Activated B cell treated with CpG ODN at 0.5 μM for 24 hours (primary cell): ENCODE measurements at regions of chr12 and their contacts with region 1.

Region 1: DNA sequence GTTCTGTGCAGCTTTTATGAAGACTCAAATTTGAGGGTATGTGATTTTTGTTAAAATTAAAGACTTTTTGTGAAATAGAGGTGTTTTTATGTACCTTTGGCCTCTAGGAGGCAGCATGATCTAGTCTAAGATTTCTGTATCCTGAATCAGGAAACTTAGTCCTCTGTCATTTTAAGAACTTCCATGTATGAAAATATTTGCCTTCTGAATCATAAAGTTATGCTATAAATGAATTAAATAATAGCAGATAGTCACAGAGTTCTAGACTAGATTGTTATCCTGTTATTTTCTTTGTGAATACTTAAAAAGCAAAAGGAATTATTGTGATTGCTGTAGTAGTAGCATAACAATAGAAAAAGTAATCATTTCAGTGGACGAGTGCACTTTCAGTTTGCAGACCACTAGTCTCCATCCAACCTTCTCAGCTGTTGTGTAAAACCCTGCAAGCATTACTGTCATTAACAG is 56.3 kb downstream of the FGD4 start:
- DNase-seq: no peak
- ATAC-seq: peak; percentile 45
- H3K4me3 Mint-ChIP-seq: peak overlapping the region; percentile 7
- H3K27ac Mint-ChIP-seq: no peak overlapping the region
- H3K4me1 Mint-ChIP-seq: peaks cover 18% of the 10 kb centered on the region
- H3K27me3 Mint-ChIP-seq: no peaks in the 10 kb centered on the region
- CTCF ChIP-seq: peak; percentile 41

Region 2: DNA sequence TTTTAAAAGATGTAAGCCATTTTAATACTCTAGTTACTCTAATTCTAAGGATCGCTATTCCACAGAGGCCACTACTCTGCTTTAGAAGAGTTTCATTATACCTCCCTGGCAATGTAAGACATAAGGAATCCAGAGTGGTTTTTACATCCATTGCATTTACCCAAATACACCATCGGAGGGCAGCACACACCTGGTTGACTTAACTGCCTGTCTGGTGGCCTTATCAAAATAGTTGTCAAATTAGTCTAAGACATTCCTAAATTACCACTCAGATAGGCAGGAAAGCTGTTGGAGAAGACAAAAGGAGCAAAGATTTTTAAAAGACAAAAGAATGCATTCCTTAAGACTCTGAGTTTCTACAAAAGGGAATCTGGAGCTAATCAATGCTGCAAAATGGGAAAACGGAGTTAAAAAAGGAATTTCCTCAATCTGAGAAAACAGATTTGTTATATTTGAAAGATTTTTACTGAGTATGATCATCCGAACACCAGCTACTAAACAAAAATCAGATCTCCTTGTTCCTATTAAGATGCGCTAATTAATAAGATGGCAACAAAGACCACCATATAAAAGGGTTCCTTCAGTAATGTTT is 90.1 kb before region 1 on chr12:
- CTCF ChIA-PET with region 1: no interaction called
- POLR2A ChIA-PET with region 1: no interaction called
- intact Hi-C with region 1: loop called (anchors 5 kb)
- DNase-seq: no peak
- ATAC-seq: peak; percentile 70
- H3K4me3 Mint-ChIP-seq: no peak overlapping the region
- H3K27ac Mint-ChIP-seq: no peak overlapping the region
- H3K4me1 Mint-ChIP-seq: no peaks in the 10 kb centered on the region
- H3K27me3 Mint-ChIP-seq: no peaks in the 10 kb centered on the region
- CTCF ChIP-seq: no peak

Region 3: DNA sequence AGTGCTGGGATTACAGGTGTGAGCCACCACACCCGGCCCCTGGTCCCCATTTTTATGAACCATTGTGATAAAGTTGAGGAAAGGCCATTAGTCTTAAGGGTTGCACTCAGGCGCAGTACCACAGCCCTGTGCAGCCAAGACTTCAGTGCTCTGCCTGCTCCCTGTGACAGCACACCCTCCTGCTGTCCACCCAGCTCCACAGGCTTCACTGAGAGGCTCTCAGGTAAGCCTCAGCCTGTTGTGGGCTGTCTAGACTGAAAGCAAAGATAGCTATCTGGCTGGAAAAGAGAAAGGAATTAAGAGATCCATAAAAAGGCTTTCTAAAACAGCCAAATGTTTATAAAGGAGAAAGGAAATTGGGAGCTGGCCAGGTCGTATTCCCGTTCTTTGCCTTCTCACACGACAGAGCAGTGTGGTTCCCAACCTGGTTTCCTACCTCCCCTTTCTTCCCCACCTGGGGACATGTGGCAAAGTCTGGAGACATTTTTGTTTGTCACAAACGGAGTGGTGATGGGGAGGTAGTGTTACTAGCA is 204.3 kb after region 1 on chr12:
- CTCF ChIA-PET with region 1: interaction called, 22 read pairs
- POLR2A ChIA-PET with region 1: no interaction called
- intact Hi-C with region 1: loop called (anchors 1 kb)
- DNase-seq: no peak
- ATAC-seq: no peak
- H3K4me3 Mint-ChIP-seq: no peak overlapping the region
- H3K27ac Mint-ChIP-seq: no peak overlapping the region
- H3K4me1 Mint-ChIP-seq: peaks cover 2% of the 10 kb centered on the region
- H3K27me3 Mint-ChIP-seq: no peaks in the 10 kb centered on the region
- CTCF ChIP-seq: no peak

Region 4: GRCh38 chr12:32679091-32679919 is 223.7 kb after region 1 on chr12 and contains the start of gene DNM1L:
- CTCF ChIA-PET with region 1: interaction called, 10 read pairs
- POLR2A ChIA-PET with region 1: no interaction called
- intact Hi-C with region 1: no loop called
- DNase-seq: peak; percentile 86
- ATAC-seq: peak; percentile 95
- H3K4me3 Mint-ChIP-seq: peak within 1 kb of the TSS; percentile 90
- H3K27ac Mint-ChIP-seq: peak within 1 kb of the TSS; percentile 83
- H3K4me1 Mint-ChIP-seq: peaks cover 36% of the 10 kb centered on the region
- H3K27me3 Mint-ChIP-seq: no peaks in the 10 kb centered on the region
- CTCF ChIP-seq: no peak
- total RNA-seq, gene DNM1L: 67.8 and 83.1 TPM in 2 replicates

Region 5: DNA sequence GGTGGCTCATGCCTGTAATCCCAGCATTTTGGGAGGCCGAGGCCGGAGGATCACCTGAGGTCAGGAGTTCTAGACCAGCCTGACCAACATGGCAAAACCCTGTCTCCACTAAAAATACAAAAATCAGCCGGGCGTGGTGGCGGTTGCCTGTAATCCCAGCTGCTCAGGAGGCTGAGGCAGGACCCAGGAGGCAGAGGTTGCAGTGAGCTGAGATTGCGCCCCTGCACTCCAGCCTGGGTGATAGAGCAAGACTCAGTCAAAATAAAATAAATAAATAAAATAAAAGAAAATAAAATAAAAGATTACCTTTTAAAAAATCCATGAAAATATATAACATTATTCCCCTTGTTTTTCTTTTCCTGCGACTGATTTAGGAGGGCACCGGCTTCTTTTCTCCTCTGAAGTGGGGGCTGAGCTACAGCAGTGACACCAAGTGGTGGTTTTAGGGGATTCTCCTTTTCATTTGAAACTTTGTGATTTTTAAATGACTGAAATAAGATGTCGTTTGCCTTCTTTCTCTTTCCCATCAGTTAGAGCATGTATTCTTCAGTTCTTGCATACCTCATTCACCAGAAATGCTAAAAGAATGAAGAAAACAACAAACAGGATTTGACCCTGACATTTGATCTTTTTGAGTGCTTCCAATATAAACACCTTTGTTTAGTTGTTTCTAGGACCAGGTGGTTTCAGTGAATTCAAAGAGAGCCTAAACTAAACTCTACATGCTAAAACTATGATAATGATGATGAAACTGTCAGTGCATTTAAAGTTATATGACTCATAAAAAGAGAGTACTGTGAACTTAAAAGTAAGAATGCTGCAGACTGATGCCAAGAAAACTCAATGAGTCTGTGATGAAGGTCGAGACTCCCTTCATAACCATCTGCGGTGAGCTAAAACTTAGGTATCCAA is 463.5 kb after region 1 on chr12:
- CTCF ChIA-PET with region 1: no interaction called
- POLR2A ChIA-PET with region 1: no interaction called
- intact Hi-C with region 1: loop called (anchors 2 kb)
- DNase-seq: no peak
- ATAC-seq: no peak
- H3K4me3 Mint-ChIP-seq: no peak overlapping the region
- H3K27ac Mint-ChIP-seq: no peak overlapping the region
- H3K4me1 Mint-ChIP-seq: no peaks in the 10 kb centered on the region
- H3K27me3 Mint-ChIP-seq: peaks cover 4% of the 10 kb centered on the region
- CTCF ChIP-seq: no peak

Region 6: GRCh38 chr12:34218165-34219045 is 1762.8 kb after region 1 on chr12:
- CTCF ChIA-PET with region 1: no interaction called
- POLR2A ChIA-PET with region 1: no interaction called
- intact Hi-C with region 1: loop called (anchors 5 kb)
- DNase-seq: peak; percentile 31
- ATAC-seq: peak; percentile 69
- H3K4me3 Mint-ChIP-seq: peak overlapping the region; percentile 70
- H3K27ac Mint-ChIP-seq: no peak overlapping the region
- H3K4me1 Mint-ChIP-seq: peaks cover 10% of the 10 kb centered on the region
- H3K27me3 Mint-ChIP-seq: peaks cover 2% of the 10 kb centered on the region
- CTCF ChIP-seq: peak; percentile 91